ENCODE measurements at regions of chr9 and their contacts with region 1.

Region 1: DNA sequence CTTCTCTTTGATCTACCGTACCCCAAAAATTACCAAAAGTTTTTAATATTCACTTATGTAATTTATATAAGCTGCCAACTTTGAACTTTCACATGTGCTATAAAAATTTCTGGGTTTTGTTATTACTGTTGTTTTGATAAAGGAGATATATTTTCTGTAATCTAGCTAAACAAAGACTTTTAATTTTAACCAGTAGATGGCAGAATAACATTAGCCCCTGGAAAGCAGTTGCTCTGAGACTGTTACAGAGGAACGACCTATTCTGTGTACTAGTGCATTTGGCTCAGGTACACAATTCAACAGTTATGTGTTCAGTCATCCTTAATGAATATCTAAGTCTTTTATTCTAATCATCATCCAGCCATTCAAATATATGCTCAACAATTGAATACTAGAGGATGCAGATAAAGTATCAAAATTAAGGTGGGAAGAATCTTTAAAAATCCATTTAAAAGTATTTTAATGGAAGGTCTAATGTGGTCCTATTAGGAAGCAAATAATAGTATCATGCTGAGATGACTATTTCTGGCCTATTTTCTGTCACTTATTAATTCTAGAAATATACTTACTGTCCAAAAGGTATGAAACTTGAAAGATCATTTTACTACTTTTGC is 8.6 kb downstream of the KLHL9 start:
- DNase-seq: no peak
- ATAC-seq: peak; percentile 61 to 75

Region 2: DNA sequence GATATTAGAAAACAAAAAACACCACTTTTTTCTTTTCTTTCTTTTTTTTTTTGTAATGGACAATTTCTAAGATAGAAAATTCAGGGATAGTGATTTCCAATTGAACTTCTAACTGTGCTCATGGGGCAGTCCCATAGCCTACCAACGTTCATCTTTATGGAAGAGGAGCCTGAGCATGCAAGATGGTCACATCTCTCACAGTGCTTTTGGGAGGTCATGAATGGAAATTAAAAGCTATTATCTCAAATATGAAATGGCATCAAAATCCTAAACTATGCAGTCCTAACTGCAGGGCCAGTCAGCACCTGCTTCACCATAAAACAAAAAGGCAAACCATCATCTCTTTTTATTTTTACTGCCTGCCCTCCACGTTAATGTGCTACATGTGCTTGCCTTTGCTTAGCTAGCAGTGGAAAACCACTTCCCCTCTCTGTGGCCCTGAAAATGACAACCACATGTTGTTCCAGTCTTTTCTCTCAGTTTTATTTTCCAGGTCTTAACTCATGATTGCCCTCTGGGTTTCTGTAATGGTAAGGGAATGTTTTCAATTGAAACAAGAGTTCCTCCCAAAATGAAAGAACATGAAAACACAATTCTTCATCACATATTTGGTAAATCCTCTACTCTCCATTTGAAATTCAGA is 265.6 kb before region 1 on chr9:
- intact Hi-C with region 1: no loop called
- DNase-seq: no peak
- ATAC-seq: no peak

Region 3: DNA sequence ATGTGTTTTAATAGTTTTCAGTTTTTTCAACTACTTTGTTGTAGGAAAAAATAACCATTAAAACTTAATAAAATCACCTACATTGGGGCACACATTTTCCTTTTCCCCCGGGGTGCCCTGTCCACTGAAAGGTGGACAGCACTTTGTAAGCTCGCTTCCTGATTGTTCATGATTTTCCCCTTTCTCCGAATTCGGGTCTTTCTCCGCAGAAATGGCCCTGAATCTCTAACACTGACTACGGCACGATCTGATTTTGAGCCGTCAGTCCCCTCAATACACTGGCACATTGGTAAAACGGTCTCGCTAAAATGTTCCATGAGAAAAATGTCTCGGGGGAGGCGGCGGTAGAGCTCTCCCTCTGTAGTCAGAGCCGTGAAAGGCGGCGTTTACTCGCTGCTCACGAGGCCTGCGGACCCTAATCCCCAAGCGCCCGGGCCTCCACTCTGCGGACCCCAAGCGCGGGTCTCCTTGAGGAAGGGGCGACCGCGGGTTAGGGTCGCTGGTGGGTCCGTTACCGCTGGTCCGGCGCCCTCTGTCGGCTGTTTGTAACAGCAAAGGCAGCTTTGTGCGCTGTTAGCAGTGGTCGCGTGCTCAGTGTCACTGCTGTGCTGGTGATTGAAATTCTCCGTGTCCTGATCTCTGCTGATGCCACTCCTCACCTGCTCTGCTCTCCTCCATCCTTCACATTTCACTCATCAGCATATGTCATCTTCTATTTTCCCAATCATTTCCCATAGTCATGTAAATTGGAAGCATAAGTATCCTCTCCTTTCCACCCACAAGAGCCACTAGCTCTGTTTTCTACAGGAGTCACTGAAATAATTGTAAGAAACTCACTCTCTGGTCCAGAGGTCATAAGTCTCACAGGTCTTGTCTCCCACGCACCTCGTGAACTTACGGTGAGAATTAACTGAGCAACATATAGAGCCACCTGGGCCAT is 69.4 kb after region 1 on chr9:
- intact Hi-C with region 1: loop called (anchors 2 to 10 kb)
- DNase-seq: peak; percentile 61
- ATAC-seq: peak; percentile 65 to 72

Measured in left cardiac atrium (tissue), 4 donors.